ENCODE measurements at regions of chr6 and their contacts with region 1.

Region 1: GRCh38 chr6:39980839-39981580 is 46.7 kb upstream of the MOCS1 start:
- DNase-seq: peak; percentile 62 to 78 (median 66)
- ATAC-seq: peak; percentile 94
- H3K4me3 ChIP-seq: no peak overlapping the region
- H3K27ac ChIP-seq: no peak overlapping the region
- H3K4me1 ChIP-seq: peaks cover 0 to 9% of the 10 kb centered on the region in 2 experiments; a peak in 2 of 5 replicates
- H3K27me3 ChIP-seq: no peaks in the 10 kb centered on the region; a peak in 1 of 5 replicates
- CTCF ChIP-seq: peak; percentile 62 to 93 (median 67)
- EP300 ChIP-seq: no peak
- POLR2A ChIP-seq: no peak
- RAD21 ChIP-seq: peak; percentile 83 to 85

Region 2: GRCh38 chr6:39377539-39377950 is 603.5 kb before region 1 on chr6:
- CTCF ChIA-PET with region 1: no interaction called
- POLR2A ChIA-PET with region 1: no interaction called
- in situ Hi-C with region 1: no loop called
- intact Hi-C with region 1: loop called (anchors 5 kb)
- DNase-seq: peak in 2 of 4 experiments; percentile 29 to 44
- ATAC-seq: peak; percentile 82
- H3K4me3 ChIP-seq: no peak overlapping the region
- H3K27ac ChIP-seq: no peak overlapping the region
- H3K4me1 ChIP-seq: no peaks in the 10 kb centered on the region
- H3K27me3 ChIP-seq: peaks cover 2 to 5% of the 10 kb centered on the region in 2 experiments; a peak in 2 of 5 replicates
- CTCF ChIP-seq: peak; percentile 54 to 63 (median 61)
- EP300 ChIP-seq: no peak
- POLR2A ChIP-seq: no peak
- RAD21 ChIP-seq: peak; percentile 52 to 75